Motor neuron (in vitro differentiated cells): ENCODE measurements at regions of chr4 and their contacts with region 1.

Region 1: GRCh38 chr4:74671080-74671698 is 123.1 kb downstream of the BTC start:
- ATAC-seq: peak in 4 of 8 experiments; percentile 63 to 80 (median 74)
- H3K4me3 ChIP-seq: no peak overlapping the region
- H3K27ac ChIP-seq: no peak overlapping the region
- H3K4me1 ChIP-seq: no peaks in the 10 kb centered on the region

Region 2: DNA sequence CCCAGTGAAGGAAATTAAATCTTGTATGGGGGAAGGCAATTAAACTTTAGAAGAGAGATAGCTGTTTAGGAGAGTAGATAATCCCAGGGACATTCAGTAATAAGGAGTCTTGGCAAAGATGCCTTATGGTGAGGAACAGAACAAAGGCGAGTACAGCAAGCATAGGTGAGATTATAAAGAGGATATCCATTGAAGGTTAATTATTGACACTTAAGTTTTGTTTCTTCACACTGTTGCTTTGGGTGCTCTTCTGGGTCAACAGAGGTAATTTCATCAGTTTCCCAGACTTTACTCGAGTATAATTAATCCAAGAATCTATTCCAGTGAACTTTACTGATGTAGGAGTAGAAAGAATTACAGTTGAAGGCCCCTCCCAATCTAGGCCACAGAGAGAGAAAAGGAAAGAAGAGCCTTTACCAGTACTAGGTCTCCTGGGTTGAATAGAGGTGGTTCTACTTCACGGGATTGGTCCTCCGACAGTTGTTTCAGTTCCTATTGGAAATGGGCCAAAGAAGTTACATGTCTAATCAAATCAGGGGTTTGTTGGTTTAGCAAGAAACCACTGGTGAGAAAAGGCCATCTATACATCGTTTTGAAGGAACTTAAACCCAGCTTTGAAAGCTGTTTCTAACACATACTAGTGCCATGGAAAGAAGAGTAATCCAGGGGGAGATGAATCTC is 335.7 kb before region 1 on chr4:
- in situ Hi-C with region 1: loop called in 1 of 9 experiments (anchors 25 kb)
- ATAC-seq: no peak
- H3K4me3 ChIP-seq: no peak overlapping the region
- H3K27ac ChIP-seq: no peak overlapping the region
- H3K4me1 ChIP-seq: no peaks in the 10 kb centered on the region

Region 3: GRCh38 chr4:74370912-74371311 is 300.3 kb before region 1 on chr4:
- in situ Hi-C with region 1: loop called in 2 of 9 experiments (anchors 25 kb)
- ATAC-seq: peak in 6 of 8 experiments; percentile 33 to 93 (median 64)
- H3K4me3 ChIP-seq: no peak overlapping the region
- H3K27ac ChIP-seq: no peak overlapping the region
- H3K4me1 ChIP-seq: no peaks in the 10 kb centered on the region

Region 4: DNA sequence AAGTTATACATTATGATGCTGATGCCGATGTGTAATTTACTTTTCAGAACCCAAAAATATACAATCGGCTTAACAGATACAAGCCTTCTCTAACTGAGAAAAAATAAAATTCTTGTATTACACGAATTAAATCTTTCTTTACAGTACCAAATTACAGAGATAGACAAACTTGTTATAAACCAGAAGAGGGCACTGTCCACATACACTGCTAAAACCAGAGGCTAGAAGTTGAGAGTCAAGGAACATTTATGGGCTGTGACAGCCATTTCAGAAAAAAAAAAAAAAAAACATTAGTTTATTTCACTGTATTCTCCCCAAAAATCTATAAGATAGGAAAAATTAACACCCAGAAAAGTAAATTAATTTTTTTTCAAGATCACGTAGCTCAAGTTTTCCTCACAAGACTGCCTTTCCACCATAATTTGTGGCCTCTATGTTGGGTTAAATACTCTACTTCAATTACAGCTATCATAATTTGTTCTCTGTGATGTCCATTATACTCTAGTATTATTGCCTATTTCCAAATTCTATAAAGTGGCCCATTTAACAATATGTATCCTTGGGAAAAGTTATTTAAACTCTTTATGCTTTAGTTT is 294.2 kb before region 1 on chr4:
- in situ Hi-C with region 1: loop called in 2 of 9 experiments (anchors 25 kb)
- ATAC-seq: peak in 4 of 8 experiments; percentile 24 to 74 (median 46)
- H3K4me3 ChIP-seq: no peak overlapping the region
- H3K27ac ChIP-seq: no peak overlapping the region
- H3K4me1 ChIP-seq: no peaks in the 10 kb centered on the region

Region 5: DNA sequence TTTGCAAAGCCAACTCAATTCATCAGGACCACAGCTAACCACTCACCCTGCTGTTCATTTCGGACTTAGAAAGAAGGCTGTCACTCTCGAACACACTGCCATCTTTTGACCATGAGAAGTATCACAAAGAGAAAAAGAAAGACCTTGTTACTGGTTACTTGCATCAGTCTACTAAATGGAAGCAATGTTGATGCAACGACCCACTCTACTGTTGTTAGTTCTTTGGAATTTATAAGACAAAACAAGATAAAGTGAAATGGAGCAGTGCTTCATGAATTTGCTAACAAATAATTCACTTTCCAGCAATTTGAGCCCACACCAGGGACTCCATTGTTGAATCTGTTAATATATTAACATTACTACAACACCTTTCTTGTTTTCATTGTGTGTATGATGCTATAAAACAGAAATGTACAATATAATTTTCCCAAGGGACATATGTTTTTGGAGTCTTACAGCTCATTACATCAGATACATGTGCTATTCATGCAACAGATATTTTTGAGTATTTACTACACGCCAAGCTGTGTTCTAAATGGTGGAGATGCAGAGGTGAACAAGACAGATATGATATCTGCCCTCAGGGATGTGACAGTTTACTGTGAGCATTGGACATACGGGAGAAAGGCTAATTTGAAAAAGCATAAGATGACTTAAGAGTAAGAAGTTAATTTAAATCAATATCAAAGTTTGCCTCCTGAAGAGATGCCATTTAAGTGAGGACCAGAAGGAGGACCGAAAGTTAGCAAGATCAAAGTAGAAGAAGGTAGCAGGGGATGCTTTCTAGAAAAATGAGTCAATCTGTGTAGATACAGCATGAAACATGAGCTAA is 139.0 kb before region 1 on chr4:
- in situ Hi-C with region 1: loop called in 1 of 9 experiments (anchors 25 kb)
- ATAC-seq: peak in 4 of 8 experiments; percentile 46 to 86 (median 72)
- H3K4me3 ChIP-seq: no peak overlapping the region
- H3K27ac ChIP-seq: no peak overlapping the region
- H3K4me1 ChIP-seq: peaks cover 0 to 3% of the 10 kb centered on the region in 2 donors